K562 (cell line): ENCODE measurements at regions of chr6 and their contacts with region 1.

Region 1: GRCh38 chr6:106979427-106979884 is 4.9 kb upstream of the CD24 start:
- DNase-seq: peak; percentile 82 to 90 (median 84)
- ATAC-seq: peak; percentile 80
- H3K4me3 ChIP-seq: no peak overlapping the region
- H3K27ac ChIP-seq: no peak overlapping the region
- H3K4me1 ChIP-seq: peaks cover 0 to 12% of the 10 kb centered on the region in 2 experiments; a peak in 2 of 5 replicates
- H3K27me3 ChIP-seq: no peaks in the 10 kb centered on the region; a peak in 1 of 5 replicates
- CTCF ChIP-seq: peak; percentile 93 to 96 (median 96)
- EP300 ChIP-seq: no peak
- POLR2A ChIP-seq: no peak
- RAD21 ChIP-seq: peak; percentile 97 to 98

Region 2: GRCh38 chr6:106444777-106445507 is 534.5 kb before region 1 on chr6:
- CTCF ChIA-PET with region 1: interaction called, 43 read pairs
- POLR2A ChIA-PET with region 1: no interaction called
- in situ Hi-C with region 1: loop called (anchors 5 kb)
- intact Hi-C with region 1: loop called (anchors 1 kb)
- DNase-seq: peak; percentile 65 to 71 (median 70)
- ATAC-seq: peak; percentile 93
- H3K4me3 ChIP-seq: no peak overlapping the region
- H3K27ac ChIP-seq: no peak overlapping the region
- H3K4me1 ChIP-seq: no peaks in the 10 kb centered on the region
- H3K27me3 ChIP-seq: peaks cover 0 to 6% of the 10 kb centered on the region in 2 experiments; a peak in 4 of 5 replicates
- CTCF ChIP-seq: peak; percentile 67 to 80 (median 75)
- EP300 ChIP-seq: no peak
- POLR2A ChIP-seq: no peak
- RAD21 ChIP-seq: peak; percentile 79 to 90

Region 3: DNA sequence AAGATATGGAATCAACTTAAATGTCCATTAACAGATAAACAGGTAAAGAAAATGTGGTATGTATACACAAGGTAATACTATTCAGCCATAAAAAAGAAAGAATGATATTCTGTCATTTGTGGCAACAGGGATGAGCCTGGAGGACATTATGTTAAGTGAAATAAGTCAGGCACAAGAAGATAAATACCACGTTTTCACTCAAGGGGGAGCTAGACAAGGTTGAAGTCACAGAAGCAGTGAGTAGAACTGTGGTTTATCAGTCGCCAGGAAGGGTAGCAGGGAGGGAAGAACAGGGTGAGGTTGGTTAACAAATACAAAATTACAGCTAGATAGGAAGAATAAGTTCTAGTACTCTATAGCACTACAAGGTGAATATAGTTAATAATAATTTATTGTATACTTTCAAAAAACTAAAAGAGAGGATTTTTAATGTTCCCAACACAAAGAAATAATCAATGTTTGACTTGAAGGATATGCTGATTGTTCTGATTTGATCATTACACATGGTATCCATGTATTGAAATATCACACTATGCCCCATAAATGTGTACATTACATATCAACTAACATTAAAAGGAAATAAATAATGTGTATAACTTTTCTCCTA is 371.3 kb before region 1 on chr6:
- CTCF ChIA-PET with region 1: interaction called, 9 read pairs
- POLR2A ChIA-PET with region 1: no interaction called
- in situ Hi-C with region 1: no loop called
- intact Hi-C with region 1: loop called (anchors 1 kb)
- DNase-seq: peak; percentile 46 to 74 (median 55)
- ATAC-seq: peak; percentile 94
- H3K4me3 ChIP-seq: no peak overlapping the region
- H3K27ac ChIP-seq: no peak overlapping the region
- H3K4me1 ChIP-seq: no peaks in the 10 kb centered on the region
- H3K27me3 ChIP-seq: no peaks in the 10 kb centered on the region
- CTCF ChIP-seq: peak; percentile 58 to 78 (median 67)
- EP300 ChIP-seq: no peak
- POLR2A ChIP-seq: no peak
- RAD21 ChIP-seq: peak; percentile 60 to 75

Region 4: GRCh38 chr6:106739387-106739786 is 240.1 kb before region 1 on chr6:
- CTCF ChIA-PET with region 1: no interaction called
- POLR2A ChIA-PET with region 1: no interaction called
- in situ Hi-C with region 1: no loop called
- intact Hi-C with region 1: loop called (anchors 10 kb)
- DNase-seq: no peak
- ATAC-seq: no peak
- H3K4me3 ChIP-seq: no peak overlapping the region
- H3K27ac ChIP-seq: no peak overlapping the region
- H3K4me1 ChIP-seq: no peaks in the 10 kb centered on the region; a peak in 1 of 5 replicates
- H3K27me3 ChIP-seq: no peaks in the 10 kb centered on the region
- CTCF ChIP-seq: no peak
- EP300 ChIP-seq: no peak
- POLR2A ChIP-seq: no peak
- RAD21 ChIP-seq: no peak

Region 5: DNA sequence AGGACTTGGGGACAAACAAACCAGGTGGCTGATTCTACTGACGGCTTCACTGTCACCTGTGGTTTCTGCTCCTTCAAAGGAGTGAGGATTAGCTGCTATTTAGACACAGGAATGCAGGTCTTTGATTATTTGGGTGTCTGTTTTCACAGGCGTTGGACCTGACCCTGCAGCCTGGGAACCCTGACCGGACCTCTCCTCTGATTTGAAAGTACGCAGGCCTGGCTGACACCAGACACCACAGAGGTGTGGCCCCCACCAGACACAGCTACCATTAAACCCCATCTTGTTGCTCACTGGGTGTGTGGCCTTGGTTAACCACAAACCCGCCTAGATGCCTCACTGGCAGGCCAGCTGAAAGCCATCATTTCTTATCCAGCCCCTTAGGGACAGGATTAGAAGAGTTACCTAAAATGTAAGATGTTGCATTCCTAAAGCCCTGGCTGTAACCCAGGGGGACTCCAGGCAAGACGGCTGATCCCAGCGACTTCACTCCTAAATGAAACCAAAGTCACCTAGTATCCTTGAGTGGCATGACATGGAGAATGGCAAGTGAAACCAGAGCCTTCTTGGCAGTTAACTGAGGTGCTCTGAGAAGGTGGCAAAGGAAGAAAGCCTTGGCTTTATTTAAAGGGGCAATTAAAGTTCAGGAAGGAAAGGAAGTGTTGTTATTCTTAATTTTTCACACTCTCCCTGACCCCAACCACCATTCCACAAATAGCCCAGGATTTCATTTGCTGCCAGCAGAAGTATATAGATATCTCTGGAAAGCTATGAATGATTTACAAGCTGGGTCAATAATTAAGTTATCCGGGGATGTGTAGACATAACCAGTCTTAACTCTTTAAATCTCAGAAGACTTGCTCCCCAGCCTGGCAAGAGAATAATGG is 180.2 kb before region 1 on chr6:
- CTCF ChIA-PET with region 1: no interaction called
- POLR2A ChIA-PET with region 1: no interaction called
- in situ Hi-C with region 1: no loop called
- intact Hi-C with region 1: no loop called
- DNase-seq: peak in 1 of 4 experiments; percentile 34
- ATAC-seq: peak; percentile 63
- H3K4me3 ChIP-seq: no peak overlapping the region
- H3K27ac ChIP-seq: no peak overlapping the region
- H3K4me1 ChIP-seq: peaks cover 4 to 5% of the 10 kb centered on the region in 2 experiments; a peak in 3 of 5 replicates
- H3K27me3 ChIP-seq: no peaks in the 10 kb centered on the region
- CTCF ChIP-seq: no peak
- EP300 ChIP-seq: no peak
- POLR2A ChIP-seq: no peak
- RAD21 ChIP-seq: no peak

Region 6: DNA sequence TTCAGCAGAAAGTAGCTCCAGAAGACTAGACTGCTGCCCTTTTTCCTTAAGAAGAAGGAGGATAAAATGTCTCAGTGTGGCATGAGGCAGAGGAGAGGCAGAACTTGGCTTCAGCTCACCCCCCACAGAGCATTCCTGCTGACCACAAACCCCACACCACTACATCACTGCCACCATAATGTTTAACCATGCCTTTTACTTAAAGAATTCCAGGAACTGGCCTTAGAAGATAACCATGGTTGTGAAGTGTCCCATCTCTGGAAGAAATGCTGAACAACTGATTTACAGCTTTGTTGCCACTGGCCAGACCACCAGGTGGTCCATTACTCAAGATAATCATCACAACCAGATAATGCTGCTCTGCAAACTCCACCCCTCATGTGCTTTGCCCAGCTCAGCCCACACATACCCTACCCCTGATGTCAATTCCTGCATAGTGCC is 159.0 kb before region 1 on chr6:
- CTCF ChIA-PET with region 1: no interaction called
- POLR2A ChIA-PET with region 1: no interaction called
- in situ Hi-C with region 1: no loop called
- intact Hi-C with region 1: loop called (anchors 5 kb)
- DNase-seq: peak; percentile 31 to 77 (median 54)
- ATAC-seq: peak; percentile 84
- H3K4me3 ChIP-seq: no peak overlapping the region
- H3K27ac ChIP-seq: no peak overlapping the region
- H3K4me1 ChIP-seq: peaks cover 15 to 17% of the 10 kb centered on the region in 2 experiments; a peak in 4 of 5 replicates
- H3K27me3 ChIP-seq: no peaks in the 10 kb centered on the region
- CTCF ChIP-seq: no peak
- EP300 ChIP-seq: peak; percentile 64
- POLR2A ChIP-seq: no peak
- RAD21 ChIP-seq: no peak